Naive thymus-derived CD4-positive, alpha-beta T cell (primary cell): ENCODE measurements at regions of chr16 and their contacts with region 1.

Region 1: GRCh38 chr16:88662843-88663606 is at the start of gene MVD:
- DNase-seq: peak; percentile 88 to 96 (median 94)
- ATAC-seq: peak; percentile 99
- H3K4me3 ChIP-seq: peak within 1 kb of the TSS; percentile 89
- H3K4me3 Mint-ChIP-seq: peak within 1 kb of the TSS; percentile 91 to 96 (median 94)
- H3K27ac ChIP-seq: peak within 1 kb of the TSS; percentile 95
- H3K27ac Mint-ChIP-seq: peak within 1 kb of the TSS; percentile 56 to 95 (median 93)
- H3K4me1 ChIP-seq: peaks cover 8% of the 10 kb centered on the region in 2 donors
- H3K4me1 Mint-ChIP-seq: peaks cover 12 to 26% (median 19%) of the 10 kb centered on the region in 7 donors
- H3K27me3 ChIP-seq: no peaks in the 10 kb centered on the region
- H3K27me3 Mint-ChIP-seq: no peaks in the 10 kb centered on the region
- total RNA-seq, gene MVD: 37.7 to 66.9 (median 42.7) TPM

Region 2: DNA sequence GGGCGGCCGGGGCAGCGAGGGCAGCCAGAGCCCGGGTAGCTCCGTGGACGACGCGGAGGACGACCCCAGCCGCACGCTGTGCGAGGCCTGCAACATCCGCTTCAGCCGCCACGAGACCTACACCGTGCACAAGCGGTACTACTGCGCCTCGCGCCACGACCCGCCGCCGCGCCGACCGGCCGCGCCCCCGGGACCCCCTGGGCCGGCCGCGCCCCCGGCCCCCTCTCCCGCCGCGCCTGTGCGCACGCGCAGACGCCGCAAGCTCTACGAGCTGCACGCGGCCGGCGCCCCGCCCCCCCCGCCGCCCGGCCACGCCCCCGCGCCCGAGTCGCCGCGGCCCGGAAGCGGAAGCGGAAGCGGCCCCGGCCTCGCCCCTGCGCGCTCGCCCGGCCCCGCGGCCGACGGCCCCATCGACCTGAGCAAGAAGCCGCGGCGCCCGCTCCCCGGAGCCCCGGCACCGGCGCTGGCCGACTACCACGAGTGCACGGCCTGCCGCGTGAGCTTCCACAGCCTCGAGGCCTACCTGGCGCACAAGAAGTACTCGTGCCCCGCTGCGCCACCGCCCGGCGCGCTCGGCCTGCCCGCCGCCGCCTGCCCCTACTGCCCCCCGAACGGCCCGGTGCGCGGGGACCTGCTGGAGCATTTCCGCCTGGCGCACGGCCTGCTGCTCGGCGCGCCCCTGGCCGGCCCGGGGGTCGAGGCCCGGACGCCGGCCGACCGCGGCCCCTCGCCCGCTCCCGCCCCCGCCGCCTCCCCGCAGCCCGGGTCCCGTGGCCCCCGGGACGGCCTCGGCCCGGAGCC is 128.9 kb before region 1 on chr16:
- CTCF ChIA-PET with region 1: no interaction called
- POLR2A ChIA-PET with region 1: no interaction called
- intact Hi-C with region 1: loop called in 1 of 2 experiments (anchors 1 kb)
- DNase-seq: peak; percentile 45 to 87 (median 77)
- ATAC-seq: peak; percentile 89
- H3K4me3 ChIP-seq: peak overlapping the region; percentile 30
- H3K4me3 Mint-ChIP-seq: peak overlapping the region in 7 of 10 donors; percentile 23 to 87 (median 55)
- H3K27ac ChIP-seq: peak overlapping the region; percentile 80
- H3K27ac Mint-ChIP-seq: peak overlapping the region in 3 of 9 donors; percentile 53 to 79 (median 72)
- H3K4me1 ChIP-seq: peaks cover 0 to 9% of the 10 kb centered on the region in 2 donors
- H3K4me1 Mint-ChIP-seq: peaks cover 9 to 16% (median 13%) of the 10 kb centered on the region in 7 donors
- H3K27me3 ChIP-seq: no peaks in the 10 kb centered on the region
- H3K27me3 Mint-ChIP-seq: peaks cover 0 to 8% (median 0%) of the 10 kb centered on the region in 5 donors

Region 3: DNA sequence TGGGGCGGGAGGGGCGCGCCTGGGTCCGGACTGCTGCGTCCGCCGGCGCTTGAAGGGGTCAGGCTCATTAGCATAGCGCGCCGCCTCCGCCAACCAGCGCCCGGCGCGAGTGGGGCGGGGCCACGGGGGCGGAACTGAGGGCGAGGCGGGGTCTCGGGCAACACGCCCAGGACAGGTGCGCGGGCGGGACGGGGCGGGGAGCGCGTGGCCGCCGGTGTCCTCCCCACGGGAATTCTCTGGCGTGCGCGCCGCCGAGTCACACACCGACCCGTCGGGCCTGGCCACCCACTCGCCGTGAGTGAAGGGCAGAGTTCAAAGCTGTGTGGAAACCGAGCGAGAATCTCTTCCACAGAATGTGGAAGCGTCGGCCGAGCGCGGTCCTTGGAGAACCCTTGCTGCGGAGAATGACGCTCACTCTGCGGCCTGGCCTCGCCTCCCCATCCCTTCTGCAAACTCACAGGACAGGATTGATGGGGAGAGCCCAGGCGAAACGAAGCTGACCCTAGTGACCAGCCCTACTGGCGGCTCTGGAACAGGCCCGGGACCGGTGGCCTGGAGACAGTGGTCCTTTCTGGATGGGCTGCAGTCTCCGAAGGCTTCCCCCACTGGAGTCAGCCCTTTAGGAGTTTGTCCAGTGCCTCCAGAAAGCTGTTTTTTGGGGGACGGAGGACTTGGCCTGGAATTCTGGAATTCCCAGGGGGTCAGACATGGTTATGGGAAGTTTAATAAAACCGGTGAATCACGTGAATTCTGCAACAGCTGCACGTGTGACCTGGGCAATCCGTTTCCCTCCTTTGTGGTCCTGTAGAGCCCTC is 23.6 kb after region 1 on chr16 and contains the start of gene SNAI3:
- CTCF ChIA-PET with region 1: interaction called, 3 read pairs
- POLR2A ChIA-PET with region 1: interaction called, 4 read pairs
- intact Hi-C with region 1: loop called (anchors 1 kb)
- DNase-seq: peak; percentile 69 to 96 (median 80)
- ATAC-seq: peak; percentile 91
- H3K4me3 ChIP-seq: peak within 1 kb of the TSS; percentile 85
- H3K4me3 Mint-ChIP-seq: peak within 1 kb of the TSS; percentile 72 to 87 (median 81)
- H3K27ac ChIP-seq: peak within 1 kb of the TSS; percentile 77
- H3K27ac Mint-ChIP-seq: peak within 1 kb of the TSS in 8 of 9 donors; percentile 6 to 81 (median 63)
- H3K4me1 ChIP-seq: peaks cover 21 to 48% of the 10 kb centered on the region in 2 donors
- H3K4me1 Mint-ChIP-seq: peaks cover 23 to 76% (median 59%) of the 10 kb centered on the region in 7 donors
- H3K27me3 ChIP-seq: no peaks in the 10 kb centered on the region
- H3K27me3 Mint-ChIP-seq: no peaks in the 10 kb centered on the region
- total RNA-seq, gene SNAI3: 2.7 to 13.0 (median 6.1) TPM

Region 4: GRCh38 chr16:88706288-88706964 is 43.4 kb after region 1 on chr16 and contains the starts of genes CTU2 and RNF166:
- CTCF ChIA-PET with region 1: no interaction called
- POLR2A ChIA-PET with region 1: interaction called, 33 read pairs
- intact Hi-C with region 1: loop called (anchors 1 kb)
- DNase-seq: peak; percentile 86 to 98 (median 92)
- ATAC-seq: peak; percentile 84
- H3K4me3 ChIP-seq: peak within 1 kb of the TSS; percentile 79
- H3K4me3 Mint-ChIP-seq: peak within 1 kb of the TSS; percentile 78 to 98 (median 94)
- H3K27ac ChIP-seq: peak within 1 kb of the TSS; percentile 88
- H3K27ac Mint-ChIP-seq: peak within 1 kb of the TSS; percentile 85 to 98 (median 97)
- H3K4me1 ChIP-seq: peaks cover 25 to 40% of the 10 kb centered on the region in 2 donors
- H3K4me1 Mint-ChIP-seq: peaks cover 31 to 45% (median 41%) of the 10 kb centered on the region in 7 donors
- H3K27me3 ChIP-seq: no peaks in the 10 kb centered on the region
- H3K27me3 Mint-ChIP-seq: no peaks in the 10 kb centered on the region
- total RNA-seq, gene CTU2: 26.0 to 43.3 (median 28.3) TPM
- total RNA-seq, gene RNF166: 99.8 to 324 (median 133) TPM

Region 5: DNA sequence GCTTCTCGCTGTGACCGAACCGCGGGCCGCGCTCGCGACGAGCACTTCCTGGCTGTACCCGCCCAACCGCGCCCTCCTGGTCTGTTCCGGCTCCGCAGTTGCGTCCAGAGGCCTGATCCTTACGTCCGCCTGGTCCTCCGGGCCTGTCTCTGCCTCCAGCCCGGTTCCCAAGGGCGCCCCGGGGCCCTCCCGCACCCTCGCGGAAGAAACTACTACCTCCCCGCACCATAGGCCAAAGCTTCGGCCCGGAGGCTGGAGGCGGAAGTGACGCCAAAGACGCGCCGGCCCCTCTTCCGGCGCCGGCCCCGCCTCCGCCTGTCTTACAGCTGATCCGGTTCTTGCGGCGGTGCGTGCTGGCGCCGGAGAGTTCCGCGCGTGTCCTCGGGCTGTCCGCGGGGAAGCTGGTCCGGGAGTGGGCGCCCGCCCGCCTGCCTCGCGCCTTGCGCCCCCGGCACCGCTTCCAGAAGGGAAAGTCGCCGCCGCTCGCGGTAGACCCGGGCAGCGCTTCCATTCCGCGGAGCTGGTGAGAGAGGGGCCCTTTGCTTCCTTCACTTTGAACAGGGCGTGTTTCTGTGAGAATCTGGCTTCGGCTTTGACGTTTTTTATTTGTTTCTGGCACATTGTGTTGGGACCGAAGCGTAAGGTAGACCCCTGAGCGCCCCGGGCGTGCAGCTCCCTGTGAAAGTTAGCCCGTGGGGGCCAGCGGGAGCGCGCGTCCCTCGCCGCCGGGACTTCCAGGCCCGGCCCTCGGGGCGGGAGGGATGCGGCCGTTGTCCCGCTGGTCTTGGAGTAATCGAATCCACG is 554.6 kb after region 1 on chr16 and contains the start of gene ZNF778:
- CTCF ChIA-PET with region 1: no interaction called
- POLR2A ChIA-PET with region 1: no interaction called
- intact Hi-C with region 1: no loop called
- DNase-seq: peak; percentile 77 to 86 (median 84)
- ATAC-seq: peak; percentile 88
- H3K4me3 ChIP-seq: peak within 1 kb of the TSS; percentile 56
- H3K4me3 Mint-ChIP-seq: peak within 1 kb of the TSS; percentile 68 to 96 (median 92)
- H3K27ac ChIP-seq: peak within 1 kb of the TSS; percentile 99
- H3K27ac Mint-ChIP-seq: peak within 1 kb of the TSS; percentile 68 to 99 (median 86)
- H3K4me1 ChIP-seq: peaks cover 5 to 10% of the 10 kb centered on the region in 2 donors
- H3K4me1 Mint-ChIP-seq: peaks cover 12 to 39% (median 29%) of the 10 kb centered on the region in 7 donors
- H3K27me3 ChIP-seq: no peaks in the 10 kb centered on the region
- H3K27me3 Mint-ChIP-seq: no peaks in the 10 kb centered on the region
- total RNA-seq, gene ZNF778: 6.0 to 13.5 (median 6.5) TPM

Region 6: GRCh38 chr16:89246903-89247733 is 584.1 kb after region 1 on chr16:
- CTCF ChIA-PET with region 1: interaction called, 3 read pairs
- POLR2A ChIA-PET with region 1: no interaction called
- intact Hi-C with region 1: loop called in 1 of 2 experiments (anchors 2 kb)
- DNase-seq: peak; percentile 85 to 99 (median 93)
- ATAC-seq: peak; percentile 99
- H3K4me3 ChIP-seq: peak overlapping the region; percentile 17
- H3K4me3 Mint-ChIP-seq: peak overlapping the region; percentile 70 to 92 (median 78)
- H3K27ac ChIP-seq: peak overlapping the region; percentile 62
- H3K27ac Mint-ChIP-seq: peak overlapping the region in 5 of 9 donors; percentile 40 to 89 (median 76)
- H3K4me1 ChIP-seq: peaks cover 0 to 5% of the 10 kb centered on the region in 2 donors
- H3K4me1 Mint-ChIP-seq: peaks cover 3 to 31% (median 21%) of the 10 kb centered on the region in 7 donors
- H3K27me3 ChIP-seq: no peaks in the 10 kb centered on the region
- H3K27me3 Mint-ChIP-seq: peaks cover 0 to 6% (median 0%) of the 10 kb centered on the region in 5 donors